AG04449 (cell line): ENCODE measurements at regions of chr9 and their contacts with region 1.

Region 1: DNA sequence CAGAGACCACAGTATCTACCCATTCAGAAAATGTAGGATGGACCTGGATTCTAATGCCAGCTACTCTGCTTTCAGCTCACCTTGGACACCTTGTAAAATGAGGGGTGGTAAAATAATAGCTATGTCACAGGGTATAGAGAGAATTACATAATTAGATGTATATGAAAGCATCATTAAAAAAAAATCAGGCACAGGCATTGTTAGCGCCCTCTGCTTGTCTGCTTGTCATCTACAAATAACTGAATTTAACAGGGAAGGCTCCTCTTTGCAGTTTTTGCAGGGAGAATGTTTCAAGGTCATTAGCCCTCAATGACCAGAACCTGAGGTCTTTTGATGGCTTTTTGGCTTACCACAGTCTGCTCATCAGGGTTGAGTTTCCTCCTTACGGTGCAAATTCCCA is 58.0 kb downstream of the GPR21 start:
- DNase-seq: no peak
- H3K4me3 ChIP-seq: no peak overlapping the region
- CTCF ChIP-seq: no peak

Region 2: GRCh38 chr9:123102375-123103110 is 11.1 kb after region 1 on chr9:
- CTCF ChIA-PET with region 1: interaction called, 44 read pairs
- POLR2A ChIA-PET with region 1: interaction called, 4 read pairs
- DNase-seq: peak; percentile 16
- H3K4me3 ChIP-seq: no peak overlapping the region
- CTCF ChIP-seq: peak; percentile 17

Region 3: DNA sequence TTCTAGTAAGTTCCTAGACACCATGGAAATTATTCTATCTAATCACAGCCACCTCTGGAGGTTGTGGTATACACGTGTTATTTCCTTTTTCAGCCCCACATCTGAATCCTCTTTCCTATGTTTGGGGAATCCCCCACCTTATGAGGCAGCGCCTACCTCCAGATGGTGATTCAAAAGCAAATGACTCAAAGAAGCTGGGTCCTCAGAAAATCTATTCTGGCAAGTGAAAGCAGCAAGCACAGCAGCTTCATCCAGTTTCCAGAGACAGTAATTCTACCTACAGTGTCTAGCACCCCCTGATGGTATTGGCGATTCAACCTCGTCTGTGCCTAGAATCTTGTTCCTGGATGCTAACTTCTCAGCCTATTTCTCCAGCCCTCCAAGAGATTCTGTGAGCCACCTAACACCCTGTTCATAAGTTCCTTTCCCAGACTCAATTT is 133.9 kb after region 1 on chr9:
- CTCF ChIA-PET with region 1: interaction called, 12 read pairs
- POLR2A ChIA-PET with region 1: no interaction called
- DNase-seq: peak; percentile 36
- H3K4me3 ChIP-seq: no peak overlapping the region
- CTCF ChIP-seq: peak; percentile 57